Activated CD4-positive, alpha-beta T cell treated with anti-CD3 and anti-CD28 coated beads for 36 hours (primary cell): ENCODE measurements at regions of chr5 and their contacts with region 1.

Region 1: DNA sequence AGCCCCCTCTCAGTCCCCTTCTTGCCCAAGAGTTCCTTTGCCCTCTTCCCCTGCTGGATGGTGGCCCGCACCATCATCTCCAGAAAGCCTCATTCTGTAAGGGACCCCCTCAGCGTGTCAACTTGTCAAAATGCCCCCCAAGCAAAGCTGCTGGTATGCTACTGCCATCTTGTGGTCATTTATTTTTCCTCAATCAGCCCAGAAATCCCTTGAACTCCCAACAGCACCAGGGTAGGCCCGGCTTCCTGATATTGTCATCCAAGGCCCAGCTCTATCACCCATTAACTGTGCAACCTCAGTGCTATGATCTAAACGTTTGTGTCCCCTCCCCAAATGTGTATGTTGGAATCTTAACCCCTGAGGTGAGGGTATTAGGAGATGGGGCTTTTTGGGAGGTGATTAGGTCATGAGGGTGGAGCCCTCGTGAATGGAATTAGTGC is 53.2 kb upstream of the FBXW11 start:
- DNase-seq: no peak
- ATAC-seq: no peak
- H3K4me3 Mint-ChIP-seq: no peak overlapping the region
- H3K27ac Mint-ChIP-seq: no peak overlapping the region
- H3K4me1 Mint-ChIP-seq: peaks cover 31% of the 10 kb centered on the region
- H3K27me3 Mint-ChIP-seq: no peaks in the 10 kb centered on the region

Region 2: GRCh38 chr5:171882118-171882517 is 177.6 kb before region 1 on chr5:
- CTCF ChIA-PET with region 1: no interaction called
- POLR2A ChIA-PET with region 1: no interaction called
- intact Hi-C with region 1: no loop called
- DNase-seq: peak; percentile 57
- ATAC-seq: peak; percentile 96
- H3K4me3 Mint-ChIP-seq: no peak overlapping the region
- H3K27ac Mint-ChIP-seq: peak overlapping the region; percentile 70
- H3K4me1 Mint-ChIP-seq: peaks cover 27% of the 10 kb centered on the region
- H3K27me3 Mint-ChIP-seq: no peaks in the 10 kb centered on the region

Region 3: DNA sequence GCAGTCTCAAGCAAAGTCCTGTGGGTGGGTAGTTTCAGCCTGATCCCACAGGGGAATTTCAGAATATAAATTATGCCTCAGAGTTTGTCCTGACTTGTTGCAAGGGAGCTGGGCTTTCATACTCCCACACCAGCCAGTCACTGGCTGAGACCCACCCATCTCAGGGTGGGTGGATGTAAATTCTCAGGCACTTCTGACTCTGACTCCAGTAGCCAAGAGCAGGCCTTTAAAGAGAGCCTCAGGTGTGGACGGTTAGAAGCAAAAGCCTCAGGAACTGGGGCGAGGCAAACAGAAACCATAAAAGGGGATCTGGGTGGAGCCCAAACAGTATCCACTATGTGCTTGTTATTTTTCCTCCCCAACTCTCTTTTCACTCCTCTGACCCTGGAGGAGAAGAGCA is 24.6 kb before region 1 on chr5:
- CTCF ChIA-PET with region 1: interaction called, 13 read pairs
- POLR2A ChIA-PET with region 1: no interaction called
- intact Hi-C with region 1: no loop called
- DNase-seq: peak; percentile 26
- ATAC-seq: peak; percentile 70
- H3K4me3 Mint-ChIP-seq: no peak overlapping the region
- H3K27ac Mint-ChIP-seq: no peak overlapping the region
- H3K4me1 Mint-ChIP-seq: peaks cover 14% of the 10 kb centered on the region
- H3K27me3 Mint-ChIP-seq: no peaks in the 10 kb centered on the region

Region 4: GRCh38 chr5:172044631-172045314 is 14.9 kb before region 1 on chr5:
- CTCF ChIA-PET with region 1: interaction called, 13 read pairs
- POLR2A ChIA-PET with region 1: no interaction called
- intact Hi-C with region 1: no loop called
- DNase-seq: no peak
- ATAC-seq: no peak
- H3K4me3 Mint-ChIP-seq: no peak overlapping the region
- H3K27ac Mint-ChIP-seq: peak overlapping the region; percentile 21
- H3K4me1 Mint-ChIP-seq: peaks cover 19% of the 10 kb centered on the region
- H3K27me3 Mint-ChIP-seq: no peaks in the 10 kb centered on the region

Region 5: DNA sequence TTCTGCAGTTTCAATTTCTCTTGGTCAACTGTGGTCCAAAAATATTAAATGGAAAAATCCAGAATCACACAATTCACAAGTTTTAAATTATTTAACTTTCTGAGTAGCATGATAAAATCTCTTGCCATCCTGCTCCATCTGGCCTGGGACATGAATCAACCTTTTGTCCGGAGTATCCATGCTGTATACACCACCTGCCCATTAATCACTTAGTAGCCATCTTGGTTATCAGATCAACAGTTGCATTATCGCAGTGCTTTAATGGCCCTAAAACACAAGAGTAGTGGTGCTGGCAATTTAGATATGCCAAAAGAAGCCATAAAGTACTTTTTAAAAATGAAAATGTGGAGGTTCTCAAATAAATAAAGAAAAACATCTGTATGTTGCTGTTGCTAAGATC is 159.6 kb after region 1 on chr5:
- CTCF ChIA-PET with region 1: no interaction called
- POLR2A ChIA-PET with region 1: no interaction called
- intact Hi-C with region 1: no loop called
- DNase-seq: no peak
- ATAC-seq: no peak
- H3K4me3 Mint-ChIP-seq: no peak overlapping the region
- H3K27ac Mint-ChIP-seq: no peak overlapping the region
- H3K4me1 Mint-ChIP-seq: peaks cover 22% of the 10 kb centered on the region
- H3K27me3 Mint-ChIP-seq: no peaks in the 10 kb centered on the region

Region 6: GRCh38 chr5:172293054-172293744 is 233.5 kb after region 1 on chr5:
- CTCF ChIA-PET with region 1: interaction called, 7 read pairs
- POLR2A ChIA-PET with region 1: no interaction called
- intact Hi-C with region 1: loop called in 1 of 2 experiments (anchors 5 kb)
- DNase-seq: peak; percentile 78
- ATAC-seq: peak; percentile 100
- H3K4me3 Mint-ChIP-seq: no peak overlapping the region
- H3K27ac Mint-ChIP-seq: no peak overlapping the region
- H3K4me1 Mint-ChIP-seq: peaks cover 2% of the 10 kb centered on the region
- H3K27me3 Mint-ChIP-seq: peaks cover 3% of the 10 kb centered on the region